ENCODE measurements at regions of chr1 and their contacts with region 1.

Region 1: GRCh38 chr1:44049839-44050238 is 18.6 kb upstream of the SLC6A9 start:
- DNase-seq: peak; percentile 12
- H3K4me3 ChIP-seq: no peak overlapping the region
- H3K27ac ChIP-seq: no peak overlapping the region
- H3K4me1 ChIP-seq: peaks cover 26% of the 10 kb centered on the region
- H3K27me3 ChIP-seq: peaks cover 0 to 4% of the 10 kb centered on the region in 2 experiments
- CTCF ChIP-seq: no peak
- POLR2A ChIP-seq: no peak

Region 2: DNA sequence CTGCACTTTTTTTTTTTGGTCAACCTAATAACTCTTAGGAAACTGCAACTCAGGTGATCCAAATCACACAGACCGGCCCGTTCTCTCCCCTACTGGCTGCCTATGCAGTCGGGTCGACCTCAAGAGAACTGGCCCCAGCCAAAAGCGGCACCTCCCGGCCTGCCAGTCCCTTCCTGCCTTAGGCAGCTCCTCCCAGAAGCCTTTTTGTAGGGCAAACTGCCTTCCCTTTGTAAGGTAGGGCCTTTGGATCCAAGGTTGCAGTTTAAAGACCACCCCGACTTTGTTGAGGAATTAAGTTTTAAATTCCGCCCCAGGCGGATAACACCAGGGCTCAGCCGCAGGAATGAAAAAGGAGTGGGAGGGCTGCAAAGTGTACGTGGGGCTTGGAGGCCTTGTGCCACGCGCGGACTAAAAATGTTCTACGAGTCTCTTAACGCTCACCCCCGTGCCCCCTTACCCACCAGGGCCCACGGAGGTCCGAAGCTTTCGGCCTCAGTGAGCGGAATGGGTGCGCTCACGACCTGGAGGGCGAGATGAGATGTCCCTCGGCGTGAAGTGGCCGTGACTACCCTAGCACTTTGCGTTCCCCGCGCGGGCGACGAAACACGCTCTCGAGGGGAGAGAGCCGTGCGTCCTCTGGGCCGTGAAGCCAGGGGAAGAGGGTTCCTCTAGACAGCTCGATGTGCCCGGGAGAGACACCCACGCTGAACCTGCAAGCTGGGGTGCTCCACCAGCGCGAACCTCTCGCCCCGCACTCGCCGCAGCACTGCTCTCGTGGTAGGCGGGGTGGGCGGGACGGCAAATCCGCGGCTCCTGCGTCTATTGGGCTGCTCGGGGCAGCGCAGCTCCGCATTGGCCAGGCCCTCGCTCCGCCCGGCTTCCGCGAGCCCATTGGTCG is 343.0 kb before region 1 on chr1:
- CTCF ChIA-PET with region 1: interaction called, 3 read pairs
- POLR2A ChIA-PET with region 1: no interaction called
- dilution Hi-C with region 1: no loop called
- intact Hi-C with region 1: loop called (anchors 5 kb)
- DNase-seq: peak; percentile 92
- H3K4me3 ChIP-seq: peak overlapping the region in 2 of 3 experiments; percentile 36 to 56
- H3K27ac ChIP-seq: no peak overlapping the region
- H3K4me1 ChIP-seq: peaks cover 36% of the 10 kb centered on the region
- H3K27me3 ChIP-seq: no peaks in the 10 kb centered on the region
- CTCF ChIP-seq: no peak
- POLR2A ChIP-seq: peak; percentile 93

Region 3: DNA sequence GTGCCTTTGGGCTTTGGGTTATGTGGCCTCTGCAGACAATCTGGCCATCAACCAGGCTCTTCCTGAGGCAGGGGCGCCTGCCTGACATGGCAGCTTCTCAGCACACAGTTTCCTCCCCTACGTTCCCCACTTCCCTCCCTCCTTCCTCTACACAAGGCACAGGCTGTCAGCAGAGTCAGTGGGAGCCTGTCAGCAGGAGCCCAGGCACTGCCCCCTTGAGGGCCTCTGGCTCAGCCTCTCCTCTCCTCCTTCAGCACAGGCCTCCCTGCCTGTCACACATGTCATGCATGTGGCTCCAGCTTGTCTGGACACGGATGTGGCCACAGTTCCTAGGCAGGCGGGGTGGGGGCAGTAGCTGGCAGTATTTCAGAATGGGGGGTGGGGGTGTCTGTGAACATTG is 168.4 kb before region 1 on chr1:
- CTCF ChIA-PET with region 1: no interaction called
- POLR2A ChIA-PET with region 1: no interaction called
- dilution Hi-C with region 1: no loop called
- intact Hi-C with region 1: no loop called
- DNase-seq: no peak
- H3K4me3 ChIP-seq: no peak overlapping the region
- H3K27ac ChIP-seq: no peak overlapping the region
- H3K4me1 ChIP-seq: no peaks in the 10 kb centered on the region
- H3K27me3 ChIP-seq: no peaks in the 10 kb centered on the region
- CTCF ChIP-seq: no peak
- POLR2A ChIP-seq: no peak

Region 4: GRCh38 chr1:44002606-44003157 is 47.2 kb before region 1 on chr1:
- CTCF ChIA-PET with region 1: interaction called, 120 read pairs
- POLR2A ChIA-PET with region 1: no interaction called
- dilution Hi-C with region 1: no loop called
- intact Hi-C with region 1: loop called (anchors 1 kb)
- DNase-seq: no peak
- H3K4me3 ChIP-seq: no peak overlapping the region
- H3K27ac ChIP-seq: no peak overlapping the region
- H3K4me1 ChIP-seq: no peaks in the 10 kb centered on the region
- H3K27me3 ChIP-seq: no peaks in the 10 kb centered on the region
- CTCF ChIP-seq: peak in 1 of 2 donors; percentile 26
- POLR2A ChIP-seq: no peak

Region 5: DNA sequence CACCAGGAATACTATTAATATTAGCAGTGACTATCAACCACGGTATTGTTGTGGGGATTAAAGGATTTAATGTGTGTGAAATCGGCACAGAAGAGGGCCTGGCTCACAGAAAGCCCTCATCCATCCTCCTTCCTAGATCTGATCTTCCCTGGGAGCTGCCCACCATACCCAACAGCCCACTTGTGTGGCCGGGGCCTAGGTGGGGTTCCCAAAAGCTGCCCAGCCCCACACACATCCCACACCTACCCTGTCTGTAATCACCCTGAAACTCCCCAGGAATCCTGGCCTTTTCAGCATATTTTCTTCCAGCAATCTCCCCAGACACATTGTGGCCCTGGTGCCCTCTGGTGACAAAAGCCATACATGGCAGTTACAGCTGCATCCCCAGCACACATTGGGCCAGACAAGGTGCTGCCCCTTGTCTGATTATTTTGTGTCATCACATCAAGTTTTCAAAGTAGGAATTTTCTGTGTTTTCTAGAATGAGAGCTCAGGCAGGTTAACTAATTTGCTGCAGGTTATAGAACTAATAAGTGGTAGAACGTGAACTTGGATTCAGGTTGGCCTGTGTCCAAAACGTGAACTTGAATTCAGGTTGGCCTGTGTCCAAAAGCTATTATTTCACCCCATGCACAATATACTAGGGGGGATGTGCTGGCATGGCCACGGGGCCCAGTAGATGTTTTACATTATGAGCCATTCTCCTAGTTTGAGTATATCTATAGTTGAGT is 13.3 kb before region 1 on chr1:
- CTCF ChIA-PET with region 1: interaction called, 58 read pairs
- POLR2A ChIA-PET with region 1: no interaction called
- dilution Hi-C with region 1: no loop called
- intact Hi-C with region 1: no loop called
- DNase-seq: peak; percentile 84
- H3K4me3 ChIP-seq: no peak overlapping the region
- H3K27ac ChIP-seq: no peak overlapping the region
- H3K4me1 ChIP-seq: no peaks in the 10 kb centered on the region
- H3K27me3 ChIP-seq: peaks cover 0 to 5% of the 10 kb centered on the region in 2 experiments
- CTCF ChIP-seq: peak; percentile 70 to 78
- POLR2A ChIP-seq: no peak

Region 6: GRCh38 chr1:44103270-44104131 is 53.7 kb after region 1 on chr1:
- CTCF ChIA-PET with region 1: interaction called, 12 read pairs
- POLR2A ChIA-PET with region 1: no interaction called
- dilution Hi-C with region 1: no loop called
- intact Hi-C with region 1: no loop called
- DNase-seq: no peak
- H3K4me3 ChIP-seq: no peak overlapping the region
- H3K27ac ChIP-seq: no peak overlapping the region
- H3K4me1 ChIP-seq: no peaks in the 10 kb centered on the region
- H3K27me3 ChIP-seq: peaks cover 0 to 6% of the 10 kb centered on the region in 2 experiments
- CTCF ChIP-seq: peak in 1 of 2 donors; percentile 30
- POLR2A ChIP-seq: no peak

Region 7: DNA sequence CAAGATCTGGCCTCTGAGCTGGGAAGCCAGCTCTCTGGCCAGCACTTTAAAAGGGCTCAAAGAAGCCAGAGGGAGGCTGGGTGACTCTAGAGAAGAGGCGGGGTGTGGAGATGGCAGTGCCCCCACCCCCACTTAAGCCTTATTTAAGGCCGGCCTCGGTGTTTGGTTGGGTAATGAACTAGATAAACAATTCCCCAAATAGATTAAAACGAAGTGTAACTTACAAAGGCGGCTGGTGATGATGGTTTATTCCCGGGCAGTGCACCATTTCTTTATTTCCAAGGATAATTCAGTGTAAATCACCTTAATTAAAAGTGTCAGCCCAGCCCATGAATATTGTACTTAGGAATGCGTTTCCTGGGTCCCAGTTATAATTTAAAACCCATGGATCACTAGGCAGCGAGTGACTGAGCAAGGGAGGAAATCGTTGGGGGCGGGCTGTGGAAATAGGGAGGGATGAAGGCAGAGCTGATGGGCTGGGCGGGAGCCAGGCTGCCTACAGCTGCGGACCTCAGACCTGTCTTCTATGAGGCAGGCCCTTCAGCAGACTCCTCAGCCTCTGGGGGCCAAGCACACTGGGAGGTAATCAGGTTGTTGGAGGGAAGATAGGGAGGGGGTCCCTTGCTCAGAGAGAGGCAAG is 569.5 kb after region 1 on chr1:
- CTCF ChIA-PET with region 1: no interaction called
- POLR2A ChIA-PET with region 1: no interaction called
- dilution Hi-C with region 1: no loop called
- intact Hi-C with region 1: no loop called
- DNase-seq: no peak
- H3K4me3 ChIP-seq: no peak overlapping the region
- H3K27ac ChIP-seq: no peak overlapping the region
- H3K4me1 ChIP-seq: no peaks in the 10 kb centered on the region
- H3K27me3 ChIP-seq: peaks cover 36 to 46% of the 10 kb centered on the region in 2 experiments
- CTCF ChIP-seq: no peak
- POLR2A ChIP-seq: no peak